ENCODE measurements at regions of chr4 and their contacts with region 1.

Region 1: GRCh38 chr4:90317785-90318184 is 190.6 kb downstream of the CCSER1 start:
- DNase-seq: peak; percentile 82
- H3K4me3 ChIP-seq: no peak overlapping the region
- H3K27ac ChIP-seq: peak overlapping the region; percentile 87
- H3K4me1 ChIP-seq: peaks cover 21% of the 10 kb centered on the region
- H3K27me3 ChIP-seq: peaks cover 0 to 2% of the 10 kb centered on the region in 2 experiments
- CTCF ChIP-seq: no peak
- POLR2A ChIP-seq: no peak

Region 2: GRCh38 chr4:89765966-89766365 is 551.8 kb before region 1 on chr4:
- CTCF ChIA-PET with region 1: no interaction called
- POLR2A ChIA-PET with region 1: no interaction called
- dilution Hi-C with region 1: no loop called
- intact Hi-C with region 1: no loop called
- DNase-seq: peak; percentile 65
- H3K4me3 ChIP-seq: no peak overlapping the region
- H3K27ac ChIP-seq: no peak overlapping the region
- H3K4me1 ChIP-seq: no peaks in the 10 kb centered on the region
- H3K27me3 ChIP-seq: no peaks in the 10 kb centered on the region
- CTCF ChIP-seq: no peak
- POLR2A ChIP-seq: no peak

Region 3: GRCh38 chr4:90281541-90282355 is 36.0 kb before region 1 on chr4:
- CTCF ChIA-PET with region 1: no interaction called
- POLR2A ChIA-PET with region 1: no interaction called
- dilution Hi-C with region 1: no loop called
- intact Hi-C with region 1: no loop called
- DNase-seq: no peak
- H3K4me3 ChIP-seq: no peak overlapping the region
- H3K27ac ChIP-seq: no peak overlapping the region
- H3K4me1 ChIP-seq: no peaks in the 10 kb centered on the region
- H3K27me3 ChIP-seq: no peaks in the 10 kb centered on the region
- CTCF ChIP-seq: no peak
- POLR2A ChIP-seq: no peak

Region 4: GRCh38 chr4:90357117-90357710 is 39.4 kb after region 1 on chr4:
- CTCF ChIA-PET with region 1: interaction called, 5 read pairs
- POLR2A ChIA-PET with region 1: no interaction called
- dilution Hi-C with region 1: no loop called
- intact Hi-C with region 1: loop called (anchors 1 kb)
- DNase-seq: peak; percentile 71
- H3K4me3 ChIP-seq: no peak overlapping the region
- H3K27ac ChIP-seq: no peak overlapping the region
- H3K4me1 ChIP-seq: no peaks in the 10 kb centered on the region
- H3K27me3 ChIP-seq: no peaks in the 10 kb centered on the region
- CTCF ChIP-seq: peak; percentile 44 to 52
- POLR2A ChIP-seq: no peak

Region 5: DNA sequence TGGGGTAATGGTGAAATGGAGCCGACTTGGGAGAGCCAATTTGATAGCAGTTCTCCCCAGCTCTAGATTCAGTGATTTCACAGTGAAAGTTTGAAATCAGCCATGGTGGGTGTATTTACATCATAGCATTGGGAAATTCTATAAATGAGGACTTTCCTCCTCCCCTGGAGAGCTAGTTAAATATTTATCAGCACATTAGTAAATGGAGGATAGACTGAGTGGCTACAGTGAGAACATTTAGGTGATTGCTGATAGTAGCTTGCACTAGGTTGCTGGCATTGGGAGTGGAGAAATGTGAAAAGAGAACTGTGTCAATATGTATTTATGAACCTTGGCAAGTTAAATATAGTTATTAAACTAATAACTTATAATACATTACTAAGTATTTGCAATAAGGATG is 156.7 kb after region 1 on chr4:
- CTCF ChIA-PET with region 1: no interaction called
- POLR2A ChIA-PET with region 1: no interaction called
- dilution Hi-C with region 1: no loop called
- intact Hi-C with region 1: no loop called
- DNase-seq: no peak
- H3K4me3 ChIP-seq: no peak overlapping the region
- H3K27ac ChIP-seq: no peak overlapping the region
- H3K4me1 ChIP-seq: no peaks in the 10 kb centered on the region
- H3K27me3 ChIP-seq: no peaks in the 10 kb centered on the region
- CTCF ChIP-seq: no peak
- POLR2A ChIP-seq: no peak

Region 6: GRCh38 chr4:90786602-90787001 is 468.8 kb after region 1 on chr4:
- CTCF ChIA-PET with region 1: no interaction called
- POLR2A ChIA-PET with region 1: no interaction called
- dilution Hi-C with region 1: no loop called
- intact Hi-C with region 1: loop called (anchors 10 kb)
- DNase-seq: no peak
- H3K4me3 ChIP-seq: no peak overlapping the region
- H3K27ac ChIP-seq: no peak overlapping the region
- H3K4me1 ChIP-seq: no peaks in the 10 kb centered on the region
- H3K27me3 ChIP-seq: no peaks in the 10 kb centered on the region
- CTCF ChIP-seq: no peak
- POLR2A ChIP-seq: no peak

Region 7: GRCh38 chr4:90852237-90852636 is 534.5 kb after region 1 on chr4:
- CTCF ChIA-PET with region 1: no interaction called
- POLR2A ChIA-PET with region 1: no interaction called
- dilution Hi-C with region 1: no loop called
- intact Hi-C with region 1: loop called (anchors 5 kb)
- DNase-seq: no peak
- H3K4me3 ChIP-seq: no peak overlapping the region
- H3K27ac ChIP-seq: no peak overlapping the region
- H3K4me1 ChIP-seq: peaks cover 8% of the 10 kb centered on the region
- H3K27me3 ChIP-seq: no peaks in the 10 kb centered on the region
- CTCF ChIP-seq: no peak
- POLR2A ChIP-seq: no peak

Region 8: GRCh38 chr4:91113130-91113706 is 795.4 kb after region 1 on chr4:
- CTCF ChIA-PET with region 1: no interaction called
- POLR2A ChIA-PET with region 1: no interaction called
- dilution Hi-C with region 1: no loop called
- intact Hi-C with region 1: loop called (anchors 5 kb)
- DNase-seq: peak; percentile 53
- H3K4me3 ChIP-seq: no peak overlapping the region
- H3K27ac ChIP-seq: no peak overlapping the region
- H3K4me1 ChIP-seq: no peaks in the 10 kb centered on the region
- H3K27me3 ChIP-seq: no peaks in the 10 kb centered on the region
- CTCF ChIP-seq: peak; percentile 31 to 48
- POLR2A ChIP-seq: no peak

Region 9: GRCh38 chr4:91502365-91502764 is 1184.6 kb after region 1 on chr4:
- CTCF ChIA-PET with region 1: no interaction called
- POLR2A ChIA-PET with region 1: no interaction called
- dilution Hi-C with region 1: no loop called
- intact Hi-C with region 1: loop called (anchors 5 kb)
- DNase-seq: peak; percentile 8
- H3K4me3 ChIP-seq: no peak overlapping the region
- H3K27ac ChIP-seq: no peak overlapping the region
- H3K4me1 ChIP-seq: no peaks in the 10 kb centered on the region
- H3K27me3 ChIP-seq: no peaks in the 10 kb centered on the region
- CTCF ChIP-seq: peak in 1 of 2 donors; percentile 4
- POLR2A ChIP-seq: no peak